Right cardiac atrium (tissue), 5 donors: ENCODE measurements at regions of chr1 and their contacts with region 1.

Region 1: DNA sequence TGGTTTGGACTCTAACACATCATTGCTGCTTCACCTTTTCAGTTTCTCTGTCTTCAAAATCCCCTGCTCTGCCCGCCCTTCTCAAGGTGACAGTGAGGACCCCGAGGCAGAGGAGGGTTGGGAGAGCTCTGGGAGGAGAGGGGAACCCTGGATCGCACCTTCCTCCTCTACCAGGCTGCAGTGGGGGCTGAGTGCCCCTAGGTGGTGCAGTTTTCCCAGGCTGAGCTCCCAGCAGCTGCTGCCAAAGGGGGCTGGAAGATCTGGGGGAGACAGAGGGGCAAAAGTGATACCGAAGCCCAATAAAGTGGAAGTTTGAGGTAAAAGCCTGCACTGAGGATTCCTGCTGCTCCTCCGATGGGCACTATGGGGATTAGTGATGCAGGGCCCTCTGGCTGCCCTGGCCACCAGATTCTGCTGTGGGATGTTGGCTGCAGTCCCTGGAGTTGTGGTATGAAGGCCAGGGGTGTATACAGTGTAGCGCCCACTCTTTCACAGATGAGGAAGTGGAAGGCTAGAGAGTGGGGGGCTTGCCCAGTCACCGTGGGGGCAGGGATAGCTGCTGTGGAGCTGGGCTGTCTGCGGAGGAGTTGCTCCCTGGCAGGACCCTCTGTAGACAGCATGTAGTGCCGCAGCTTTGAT is 40.7 kb upstream of the SCMH1 start:
- DNase-seq: peak; percentile 37 to 70 (median 64)
- ATAC-seq: peak; percentile 55 to 58
- H3K4me3 ChIP-seq: no peak overlapping the region
- H3K27ac ChIP-seq: no peak overlapping the region
- H3K4me1 ChIP-seq: peaks cover 9% of the 10 kb centered on the region
- H3K27me3 ChIP-seq: no peaks in the 10 kb centered on the region

Region 2: DNA sequence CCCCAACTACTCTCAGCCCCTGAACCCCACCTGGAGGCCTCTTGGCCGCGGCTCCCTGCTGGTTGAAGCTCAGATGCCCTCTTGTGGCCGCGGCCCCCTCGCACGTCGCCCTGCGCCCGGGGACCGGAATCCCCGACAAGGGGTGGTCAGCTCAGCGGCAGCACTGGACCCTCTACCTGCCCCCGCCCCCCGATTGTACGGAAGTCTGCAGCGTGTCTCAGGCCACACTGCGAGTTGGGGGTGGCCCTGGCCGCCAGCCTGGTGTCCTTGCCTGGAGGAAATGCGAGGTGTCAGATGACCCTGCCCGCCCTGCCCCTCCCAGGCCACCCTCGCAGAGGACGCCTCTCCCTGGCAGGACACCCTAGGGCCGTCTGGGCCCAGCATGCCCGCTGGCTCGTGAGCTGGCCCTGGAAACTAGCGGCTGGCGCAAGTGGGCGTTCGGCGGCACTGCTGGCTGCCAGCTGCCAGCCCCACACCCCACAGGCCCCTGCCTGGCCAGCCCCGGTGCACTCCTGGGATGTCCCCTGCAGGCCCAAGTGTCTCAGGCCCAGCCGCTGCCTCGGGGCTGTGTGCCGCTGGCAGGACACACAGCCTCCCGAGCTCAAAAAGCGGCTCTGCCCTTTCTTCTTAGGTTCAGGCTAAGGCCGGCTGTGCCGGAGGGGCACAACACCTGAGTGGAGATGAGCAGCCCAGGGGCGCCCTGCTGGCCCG is 140.9 kb after region 1 on chr1:
- intact Hi-C with region 1: loop called in 3 of 4 experiments (anchors 5 kb)
- DNase-seq: peak; percentile 44 to 81 (median 73)
- ATAC-seq: peak; percentile 50 to 52
- H3K4me3 ChIP-seq: no peak overlapping the region
- H3K27ac ChIP-seq: no peak overlapping the region
- H3K4me1 ChIP-seq: no peaks in the 10 kb centered on the region
- H3K27me3 ChIP-seq: no peaks in the 10 kb centered on the region